Dorsolateral prefrontal cortex (tissue), 120 donors: ENCODE measurements at regions of chr12 and their contacts with region 1.

Region 1: DNA sequence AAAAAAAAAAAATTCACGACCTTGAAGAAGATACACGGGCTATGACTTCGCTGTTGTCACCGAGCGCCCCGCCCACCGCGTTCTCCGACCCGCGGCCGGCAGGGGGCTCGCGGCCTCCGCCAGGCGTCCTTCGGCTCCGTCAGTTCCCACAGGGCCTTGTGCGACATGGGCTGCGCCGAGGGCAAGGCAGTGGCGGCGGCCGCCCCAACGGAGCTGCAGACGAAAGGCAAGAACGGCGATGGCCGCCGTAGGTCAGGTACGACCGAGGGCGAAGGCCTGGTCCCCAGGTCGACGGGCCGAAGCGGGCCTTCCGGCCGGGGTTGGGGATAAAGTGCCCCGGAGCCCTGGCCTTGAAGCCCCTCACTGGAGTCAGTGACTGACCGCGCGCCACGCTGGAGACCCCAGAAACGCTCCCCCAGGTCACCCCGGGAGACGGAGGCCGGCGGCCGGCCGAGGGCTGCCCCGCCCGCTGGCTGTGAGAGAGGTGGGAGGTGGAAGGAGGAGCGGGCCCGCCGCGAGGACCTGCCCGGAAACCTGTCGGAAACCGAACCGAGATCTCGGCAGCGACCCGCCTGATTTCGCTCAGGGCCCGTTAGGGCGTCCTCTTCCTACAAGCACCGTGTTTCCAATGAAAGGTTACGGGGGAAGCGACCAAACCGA is at the start of gene TXNRD1:
- DNase-seq: peak; percentile 48 to 81 (median 62)
- H3K4me3 ChIP-seq: peak within 1 kb of the TSS; percentile 38 to 80 (median 66)
- H3K27ac ChIP-seq: peak within 1 kb of the TSS in 50 of 59 donors; percentile 11 to 88 (median 60)
- H3K27me3 ChIP-seq: no peaks in the 10 kb centered on the region
- CTCF ChIP-seq: peak; percentile 21 to 83 (median 70)
- total RNA-seq, gene TXNRD1: 36.0 to 75.9 (median 53.3) TPM

Region 2: GRCh38 chr12:104286538-104287482 is 71.0 kb after region 1 on chr12:
- intact Hi-C with region 1: loop called in 1 of 2 experiments (anchors 5 kb)
- DNase-seq: peak; percentile 76 to 90 (median 88)
- H3K4me3 ChIP-seq: peak overlapping the region; percentile 52 to 97 (median 81)
- H3K27ac ChIP-seq: peak overlapping the region; percentile 48 to 97 (median 91)
- H3K27me3 ChIP-seq: no peaks in the 10 kb centered on the region
- CTCF ChIP-seq: peak in 16 of 56 donors; percentile 4 to 39 (median 16)

Region 3: DNA sequence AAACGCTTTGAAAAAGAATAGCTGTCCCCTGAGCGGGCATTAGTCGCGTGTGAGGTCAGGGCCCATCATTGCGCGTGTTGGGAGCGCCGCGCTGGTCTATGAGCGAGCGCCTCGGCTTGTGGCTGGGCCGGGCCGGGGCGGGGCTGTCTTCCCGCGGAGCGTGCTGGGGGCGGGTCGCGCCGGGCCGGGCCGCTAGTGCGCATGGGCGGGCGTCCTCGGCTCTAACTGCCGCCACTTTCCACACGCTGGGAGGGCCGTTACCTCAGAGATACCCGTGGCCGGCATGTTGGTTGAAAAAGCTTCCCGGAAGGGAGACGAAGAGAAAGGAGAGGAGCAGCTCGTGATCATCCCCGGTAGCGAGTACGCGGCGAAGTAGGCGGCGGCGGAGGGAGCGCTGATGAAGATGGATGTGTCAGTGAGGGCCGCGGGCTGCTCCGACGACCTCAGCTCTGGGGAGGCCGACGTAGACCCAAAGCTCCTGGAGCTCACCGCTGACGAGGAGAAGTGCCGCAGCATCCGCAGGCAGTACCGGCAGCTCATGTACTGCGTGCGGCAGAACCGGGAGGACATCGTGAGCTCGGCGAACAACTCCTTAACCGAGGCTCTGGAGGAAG is 87.9 kb after region 1 on chr12 and contains the start of gene EID3:
- intact Hi-C with region 1: loop called in 1 of 2 experiments (anchors 5 kb)
- DNase-seq: peak; percentile 82 to 95 (median 86)
- H3K4me3 ChIP-seq: peak within 1 kb of the TSS; percentile 42 to 79 (median 66)
- H3K27ac ChIP-seq: peak within 1 kb of the TSS in 53 of 59 donors; percentile 3 to 86 (median 54)
- H3K27me3 ChIP-seq: no peaks in the 10 kb centered on the region
- CTCF ChIP-seq: peak in 26 of 56 donors; percentile 5 to 59 (median 29)
- total RNA-seq, gene EID3: 2.7 to 9.5 (median 5.7) TPM